GM13976 (cell line): ENCODE measurements at regions of chr5 and their contacts with region 1.

Region 1: GRCh38 chr5:173573126-173573960 is 43.1 kb downstream of the BOD1 start:
- DNase-seq: peak; percentile 88
- CTCF ChIP-seq: peak; percentile 99

Region 2: DNA sequence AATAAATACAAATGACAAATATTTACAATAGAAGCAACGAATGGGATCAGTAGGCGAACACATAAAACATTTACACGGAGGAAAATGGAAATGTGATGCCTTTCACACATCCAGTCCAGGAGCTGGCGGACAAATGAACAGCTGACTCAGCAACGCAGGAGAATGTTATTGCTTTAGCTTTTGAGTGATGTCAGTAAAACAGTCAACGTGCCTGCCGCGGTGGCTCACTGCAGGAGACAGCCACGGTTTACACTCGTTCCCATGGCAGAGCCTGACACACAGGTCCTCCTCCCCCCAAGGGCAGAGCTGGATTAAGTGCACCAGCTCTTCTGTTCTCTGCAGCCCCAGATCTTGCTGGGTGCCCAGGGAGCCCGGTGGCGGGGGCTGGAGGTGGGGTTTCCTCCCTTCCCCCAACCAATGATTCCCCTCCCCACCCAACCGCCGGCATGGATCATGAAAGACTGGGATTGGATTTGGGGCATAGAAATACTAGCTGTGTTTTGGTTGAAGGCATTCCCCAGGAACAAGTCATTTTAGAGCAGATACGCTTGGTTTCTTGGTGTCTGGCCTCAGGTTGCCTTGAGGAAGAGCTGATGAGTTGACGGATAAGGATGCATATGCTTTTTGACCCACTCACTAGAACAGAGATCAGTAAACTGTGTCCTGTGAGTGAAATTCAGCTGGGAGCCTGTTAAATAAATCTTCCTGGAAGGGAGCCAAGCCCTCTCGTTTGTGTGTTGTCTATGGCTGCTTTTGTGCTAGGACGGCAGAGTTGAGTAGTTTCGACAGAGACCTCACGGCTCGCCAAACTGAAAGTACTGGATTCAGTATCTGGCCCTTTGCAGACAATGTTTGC is 257.6 kb before region 1 on chr5:
- in situ Hi-C with region 1: loop called (anchors 25 kb)
- DNase-seq: no peak
- CTCF ChIP-seq: no peak

Region 3: DNA sequence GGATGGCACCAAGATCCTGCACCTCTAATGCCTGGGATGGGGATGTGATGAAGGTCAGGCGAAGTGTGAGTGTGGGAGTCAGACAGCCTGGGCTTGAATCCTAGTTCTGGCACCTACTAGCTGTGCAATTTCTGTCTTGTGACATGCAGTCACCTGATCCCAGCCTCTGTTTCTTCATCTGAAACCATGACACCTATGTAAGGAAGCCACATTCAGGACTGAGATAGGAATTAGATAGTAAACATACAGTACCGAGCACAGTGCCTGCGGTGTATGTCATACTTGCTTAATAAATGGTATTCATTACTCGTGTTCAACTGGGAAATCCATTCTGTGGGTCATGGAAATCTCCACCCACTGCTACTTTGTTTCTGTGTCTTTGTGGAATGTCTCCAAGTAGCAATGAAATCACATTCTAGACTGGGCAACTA is 104.5 kb before region 1 on chr5:
- in situ Hi-C with region 1: loop called (anchors 10 kb)
- DNase-seq: no peak
- CTCF ChIP-seq: no peak